Right ventricle myocardium superior (tissue), 1 donor: ENCODE measurements at regions of chr1 and their contacts with region 1.

Region 1: DNA sequence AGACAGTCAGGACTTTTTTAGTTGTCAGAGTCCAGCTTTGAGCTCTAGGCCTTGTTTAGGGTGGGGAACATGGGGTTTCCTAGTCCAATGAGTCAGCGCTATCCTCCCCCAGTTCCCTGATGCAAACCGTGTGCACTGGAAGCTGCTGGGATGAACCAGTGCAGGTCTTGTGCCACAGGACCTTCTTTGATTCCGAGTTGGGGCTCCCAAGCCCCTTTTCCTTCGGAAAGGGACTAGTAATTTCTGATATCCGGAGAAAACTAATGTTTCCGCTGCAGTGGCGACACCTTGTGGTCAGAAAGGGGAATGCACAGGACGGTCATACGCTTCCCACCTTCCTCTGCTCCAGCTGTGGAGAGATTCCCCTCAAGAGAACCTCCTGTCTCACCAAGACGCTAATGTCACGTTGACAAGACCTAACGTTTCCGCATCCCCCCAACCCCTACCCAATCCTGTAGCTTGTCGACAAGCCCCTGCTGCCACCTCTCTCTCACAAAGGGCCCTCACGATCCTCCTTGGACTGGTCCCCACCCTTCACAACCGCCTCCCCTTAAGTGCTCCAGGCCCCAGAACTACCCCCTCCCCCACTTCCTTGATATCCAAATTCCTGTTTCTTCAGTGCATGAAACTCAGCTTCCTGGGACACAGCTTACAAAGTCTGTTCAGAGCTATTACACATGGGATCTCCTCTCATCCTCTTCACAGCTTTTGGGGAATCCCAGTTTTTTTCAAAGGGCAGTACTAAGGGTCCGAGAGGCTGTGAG is 30.9 kb downstream of the GPA33 start:
- DNase-seq: peak; percentile 82
- ATAC-seq: peak; percentile 76

Region 2: GRCh38 chr1:166895793-166896192 is 163.4 kb before region 1 on chr1:
- intact Hi-C with region 1: no loop called
- DNase-seq: no peak
- ATAC-seq: no peak

Region 3: DNA sequence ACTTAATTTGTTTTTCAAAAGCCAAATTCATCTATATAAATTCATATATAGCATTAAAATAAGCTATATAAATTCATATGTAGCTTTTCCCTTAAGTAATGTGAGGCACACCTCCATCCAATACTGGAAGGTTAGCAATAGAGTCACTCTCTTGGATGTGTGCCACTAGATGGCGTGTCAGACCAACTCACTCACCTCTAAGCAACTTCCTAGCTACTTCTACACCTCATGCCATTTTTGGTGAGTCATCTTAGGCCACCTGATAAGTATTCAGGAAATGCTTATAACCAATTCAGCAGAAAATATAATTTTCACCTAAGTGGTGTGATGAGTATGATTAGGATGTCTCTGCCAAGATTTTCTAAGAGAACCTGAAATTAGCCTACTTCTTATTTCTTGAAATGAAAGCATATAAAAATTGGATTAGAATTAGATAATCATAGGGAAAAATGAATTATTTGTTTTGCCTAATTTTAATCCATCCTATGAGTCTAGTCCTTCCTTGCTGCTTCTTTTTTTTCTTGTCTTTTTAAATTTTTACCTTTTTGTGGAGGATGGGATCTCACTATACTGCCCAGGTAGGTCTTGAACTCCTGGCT is 148.7 kb before region 1 on chr1:
- intact Hi-C with region 1: loop called (anchors 5 kb)
- DNase-seq: peak; percentile 50
- ATAC-seq: peak; percentile 97

Region 4: DNA sequence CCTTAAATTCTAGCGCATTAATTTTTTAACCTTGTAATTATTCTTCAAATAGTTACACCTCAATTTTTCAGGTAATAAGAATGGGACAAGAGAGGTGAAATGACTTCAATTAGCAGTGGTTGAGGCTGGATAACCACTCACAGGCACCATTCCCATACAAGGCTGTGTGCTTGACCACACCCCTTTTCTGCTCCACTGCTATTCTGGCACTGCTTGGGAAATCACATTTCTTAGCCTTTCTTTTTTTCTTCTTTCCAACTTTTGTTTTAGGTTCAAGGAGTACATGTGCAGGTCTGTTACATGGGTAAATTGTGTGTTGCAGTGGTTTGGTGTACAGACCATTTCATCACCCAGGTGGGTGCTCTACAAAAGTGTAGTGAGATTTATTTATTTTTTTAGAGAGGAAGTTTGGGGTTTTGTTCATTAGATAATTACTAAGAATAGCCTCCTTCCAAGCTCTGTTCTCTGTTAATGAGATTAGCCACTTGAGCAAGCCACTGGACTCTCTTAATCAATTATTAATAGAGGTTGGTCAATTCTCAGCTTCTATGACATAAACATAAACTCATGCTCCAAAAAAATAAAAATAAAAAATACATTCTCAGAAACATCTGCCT is 98.3 kb before region 1 on chr1:
- intact Hi-C with region 1: no loop called
- DNase-seq: no peak
- ATAC-seq: no peak